Sigmoid colon (tissue), 7 donors: ENCODE measurements at regions of chr6 and their contacts with region 1.

Region 1: GRCh38 chr6:32153564-32154513 is at the start of gene PPT2:
- DNase-seq: peak; percentile 98
- H3K4me3 ChIP-seq: peak within 1 kb of the TSS; percentile 61 to 80 (median 78)
- H3K27ac ChIP-seq: peak within 1 kb of the TSS; percentile 88 to 93 (median 92)
- H3K4me1 ChIP-seq: peaks cover 0 to 59% (median 49%) of the 10 kb centered on the region in 4 donors
- H3K27me3 ChIP-seq: no peaks in the 10 kb centered on the region
- CTCF ChIP-seq: peak in 2 of 4 experiments; percentile 13 to 19
- EP300 ChIP-seq: peak in 2 of 4 donors; percentile 2 to 91
- POLR2A ChIP-seq: peak in 1 of 2 donors; percentile 47
- total RNA-seq, gene PPT2: 15.5 to 126 (median 62.7) TPM

Region 2: DNA sequence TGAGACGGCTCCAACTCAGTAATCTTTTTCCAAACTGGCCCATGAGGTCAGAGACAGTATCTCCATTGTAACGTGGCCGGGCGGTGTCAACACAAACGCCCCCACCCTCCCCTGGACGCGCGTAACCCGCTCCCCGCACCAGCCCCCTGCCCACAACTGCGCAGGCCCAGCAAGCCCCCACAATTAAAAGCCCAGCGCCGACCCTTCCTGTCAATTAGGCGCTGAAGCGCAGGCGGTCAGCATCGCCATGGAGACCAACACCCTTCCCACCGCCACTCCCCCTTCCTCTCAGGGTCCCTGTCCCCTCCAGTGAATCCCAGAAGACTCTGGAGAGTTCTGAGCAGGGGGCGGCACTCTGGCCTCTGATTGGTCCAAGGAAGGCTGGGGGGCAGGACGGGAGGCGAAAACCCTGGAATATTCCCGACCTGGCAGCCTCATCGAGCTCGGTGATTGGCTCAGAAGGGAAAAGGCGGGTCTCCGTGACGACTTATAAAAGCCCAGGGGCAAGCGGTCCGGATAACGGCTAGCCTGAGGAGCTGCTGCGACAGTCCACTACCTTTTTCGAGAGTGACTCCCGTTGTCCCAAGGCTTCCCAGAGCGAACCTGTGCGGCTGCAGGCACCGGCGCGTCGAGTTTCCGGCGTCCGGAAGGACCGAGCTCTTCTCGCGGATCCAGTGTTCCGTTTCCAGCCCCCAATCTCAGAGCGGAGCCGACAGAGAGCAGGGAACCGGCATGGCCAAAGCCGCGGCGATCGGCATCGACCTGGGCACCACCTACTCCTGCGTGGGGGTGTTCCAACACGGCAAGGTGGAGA is 338.6 kb before region 1 on chr6 and contains the starts of genes HSPA1A and HSPA1L:
- intact Hi-C with region 1: no loop called
- DNase-seq: peak; percentile 99
- H3K4me3 ChIP-seq: peak within 1 kb of the TSS; percentile 61 to 78 (median 65)
- H3K27ac ChIP-seq: peak within 1 kb of the TSS; percentile 95 to 100 (median 99)
- H3K4me1 ChIP-seq: peaks cover 0 to 41% (median 39%) of the 10 kb centered on the region in 4 donors
- H3K27me3 ChIP-seq: no peaks in the 10 kb centered on the region
- CTCF ChIP-seq: no peak
- EP300 ChIP-seq: peak in 1 of 4 donors; percentile 74
- POLR2A ChIP-seq: peak; percentile 100
- total RNA-seq, gene HSPA1A: 147 to 321 (median 168) TPM
- total RNA-seq, gene HSPA1L: 1.1 to 2.3 (median 1.8) TPM

Region 3: DNA sequence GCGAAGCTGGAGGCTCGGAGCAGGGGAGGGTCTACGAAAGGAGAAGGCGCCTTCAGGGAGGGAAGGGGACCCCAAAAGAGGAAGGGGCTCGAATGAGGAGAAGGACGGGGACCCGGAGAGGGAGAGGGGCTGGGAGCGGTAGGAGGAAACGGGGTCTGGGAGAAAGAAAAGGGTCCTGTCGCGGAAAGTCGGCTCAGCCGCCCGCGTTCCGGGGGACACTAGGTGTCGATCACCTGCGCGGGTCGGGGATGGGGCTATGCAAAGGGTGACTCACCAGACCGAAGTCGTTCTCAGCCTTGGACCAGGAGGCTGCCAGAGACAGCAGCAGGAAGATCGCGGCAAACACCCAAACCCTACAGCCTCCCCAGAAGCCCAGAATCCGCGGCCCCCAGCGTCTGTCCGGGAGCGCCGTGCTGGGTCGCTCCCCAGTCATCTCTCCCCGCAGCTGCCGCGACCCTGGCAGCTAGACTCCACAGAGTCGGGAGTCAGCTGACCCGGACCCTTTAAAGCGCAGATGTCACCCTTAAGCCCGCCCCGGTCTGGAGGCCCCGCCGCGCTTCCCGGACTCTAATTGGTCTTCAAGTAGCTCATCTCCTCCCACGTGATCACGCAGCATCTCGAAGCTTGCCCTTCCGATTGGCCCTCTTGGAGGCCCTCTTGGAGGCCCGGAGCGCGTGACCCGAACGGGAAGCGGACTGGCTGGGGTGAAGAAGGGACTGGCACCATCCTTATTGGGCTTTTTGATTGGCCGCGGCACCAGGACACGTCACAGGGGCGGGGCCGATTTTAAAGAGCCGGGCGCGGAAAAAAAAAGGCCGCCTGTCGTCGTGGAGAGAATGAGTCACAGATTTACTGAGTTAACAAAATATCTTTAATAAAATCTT is 291.3 kb before region 1 on chr6 and contains the start of gene NEU1:
- intact Hi-C with region 1: no loop called
- DNase-seq: peak; percentile 100
- H3K4me3 ChIP-seq: peak within 1 kb of the TSS; percentile 60 to 74 (median 68)
- H3K27ac ChIP-seq: peak within 1 kb of the TSS; percentile 84 to 89 (median 88)
- H3K4me1 ChIP-seq: peaks cover 0 to 25% (median 15%) of the 10 kb centered on the region in 4 donors
- H3K27me3 ChIP-seq: no peaks in the 10 kb centered on the region
- CTCF ChIP-seq: no peak
- EP300 ChIP-seq: peak in 2 of 4 donors; percentile 7 to 61
- POLR2A ChIP-seq: peak; percentile 97
- total RNA-seq, gene NEU1: 31.3 to 43.2 (median 33.6) TPM

Region 4: DNA sequence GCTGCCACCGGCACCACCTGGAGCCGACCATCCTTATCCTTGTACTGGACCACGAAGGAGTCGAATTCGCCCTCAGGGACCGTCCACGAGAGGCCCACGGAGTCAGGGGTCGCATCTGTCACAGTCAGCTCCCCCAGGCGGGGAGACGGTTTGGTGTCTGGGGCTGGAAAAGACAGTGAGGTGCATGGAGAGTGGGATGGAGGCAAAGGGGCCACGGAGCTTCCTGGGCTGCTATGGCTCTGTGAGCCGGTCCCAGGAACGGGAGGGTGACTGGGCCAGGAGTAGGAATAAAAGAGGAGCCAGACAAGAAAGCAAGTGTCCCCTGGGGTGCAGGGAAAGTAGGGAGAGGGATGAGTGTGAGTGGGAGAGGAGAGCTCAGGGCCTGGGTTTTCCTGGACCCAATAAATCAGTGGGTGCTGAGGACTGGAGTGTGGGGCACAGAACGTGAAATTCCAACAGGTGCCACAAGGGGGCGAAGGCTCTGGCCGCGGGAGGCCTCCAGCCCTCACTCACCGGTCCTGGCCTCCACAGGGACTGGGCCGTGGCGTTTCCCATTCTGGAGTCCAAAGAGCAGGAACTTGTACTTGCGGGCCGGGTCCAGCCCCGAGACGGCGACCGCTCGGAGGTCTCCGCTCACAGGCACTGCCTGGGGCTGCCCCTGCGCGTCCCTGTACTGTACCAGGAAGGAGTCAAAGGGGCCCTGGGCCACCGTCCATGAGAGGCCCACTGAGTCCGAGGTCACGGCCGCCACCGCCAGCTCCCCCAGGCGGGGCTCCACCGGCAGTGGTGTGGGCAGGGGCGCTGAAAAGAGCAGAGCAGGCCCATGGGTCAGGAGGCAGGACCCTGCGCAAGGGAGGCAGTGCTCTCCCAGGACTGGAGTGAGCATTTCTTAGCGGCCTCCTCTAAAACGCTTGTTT is 105.7 kb before region 1 on chr6:
- intact Hi-C with region 1: loop called (anchors 10 kb)
- DNase-seq: peak; percentile 89
- H3K4me3 ChIP-seq: no peak overlapping the region
- H3K27ac ChIP-seq: peak overlapping the region; percentile 54 to 83 (median 66)
- H3K4me1 ChIP-seq: peaks cover 0 to 29% (median 27%) of the 10 kb centered on the region in 4 donors
- H3K27me3 ChIP-seq: no peaks in the 10 kb centered on the region
- CTCF ChIP-seq: peak; percentile 72 to 93 (median 77)
- EP300 ChIP-seq: no peak
- POLR2A ChIP-seq: no peak

Region 5: GRCh38 chr6:32108727-32109113 is 45.1 kb before region 1 on chr6:
- intact Hi-C with region 1: no loop called
- DNase-seq: no peak
- H3K4me3 ChIP-seq: peak overlapping the region; percentile 20 to 48 (median 40)
- H3K27ac ChIP-seq: peak overlapping the region; percentile 70 to 80 (median 76)
- H3K4me1 ChIP-seq: peaks cover 0 to 70% (median 57%) of the 10 kb centered on the region in 4 donors
- H3K27me3 ChIP-seq: no peaks in the 10 kb centered on the region
- CTCF ChIP-seq: no peak
- EP300 ChIP-seq: no peak
- POLR2A ChIP-seq: no peak

Region 6: DNA sequence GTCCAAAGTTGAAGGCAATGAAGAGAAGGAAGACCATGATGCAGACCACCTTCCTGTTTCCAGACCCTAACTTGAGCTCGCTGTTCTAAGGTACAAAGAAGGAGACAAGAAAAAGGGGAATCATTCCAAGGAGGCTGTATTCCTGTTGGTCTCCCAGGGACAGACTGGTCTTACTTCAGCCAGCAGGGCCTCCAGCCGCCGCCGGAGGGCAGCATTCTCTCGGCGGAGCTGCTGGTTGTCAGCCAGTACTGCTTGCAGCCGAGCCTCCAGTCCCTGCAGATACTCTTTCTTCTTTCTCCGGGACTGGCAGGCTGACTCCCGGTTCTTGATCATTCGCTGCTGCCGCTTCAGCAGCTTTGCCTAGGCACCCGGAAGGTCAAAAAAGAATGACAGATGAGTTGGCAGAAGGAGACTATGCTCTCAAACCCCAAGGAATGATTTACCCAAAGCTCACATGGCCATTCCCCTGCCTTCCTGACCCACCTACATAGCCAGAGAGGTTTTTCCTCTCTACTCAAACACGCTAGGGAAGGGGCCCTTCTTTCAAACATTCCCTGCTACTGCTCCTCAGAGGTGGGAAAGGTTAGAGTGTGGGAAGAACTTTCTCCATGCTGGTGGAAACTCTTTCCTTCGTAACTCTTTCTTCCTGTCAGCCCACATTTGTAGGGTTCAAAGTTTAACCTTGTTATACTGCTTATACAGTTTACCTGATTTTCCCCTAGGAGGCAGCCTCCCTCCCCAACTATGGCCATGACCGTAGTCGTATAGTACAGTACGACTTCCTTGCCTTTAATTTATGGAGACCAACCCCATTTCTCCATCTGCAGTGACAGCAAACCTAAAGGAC is 34.8 kb before region 1 on chr6:
- intact Hi-C with region 1: loop called (anchors 1 kb)
- DNase-seq: peak; percentile 96
- H3K4me3 ChIP-seq: no peak overlapping the region
- H3K27ac ChIP-seq: peak overlapping the region; percentile 52 to 69 (median 63)
- H3K4me1 ChIP-seq: peaks cover 0 to 18% (median 16%) of the 10 kb centered on the region in 4 donors
- H3K27me3 ChIP-seq: no peaks in the 10 kb centered on the region
- CTCF ChIP-seq: peak; percentile 77 to 93 (median 90)
- EP300 ChIP-seq: no peak
- POLR2A ChIP-seq: no peak

Region 7: GRCh38 chr6:32127717-32128592 is 25.9 kb before region 1 on chr6 and contains the start of gene ATF6B:
- intact Hi-C with region 1: loop called (anchors 1 kb)
- DNase-seq: peak; percentile 100
- H3K4me3 ChIP-seq: peak within 1 kb of the TSS; percentile 77 to 92 (median 83)
- H3K27ac ChIP-seq: peak within 1 kb of the TSS; percentile 91 to 94 (median 92)
- H3K4me1 ChIP-seq: peaks cover 0 to 36% (median 31%) of the 10 kb centered on the region in 4 donors
- H3K27me3 ChIP-seq: no peaks in the 10 kb centered on the region
- CTCF ChIP-seq: no peak
- EP300 ChIP-seq: no peak
- POLR2A ChIP-seq: peak; percentile 68 to 76
- total RNA-seq, gene ATF6B: 24.5 to 73.4 (median 24.8) TPM

Region 8: GRCh38 chr6:32177788-32178546 is 24.1 kb after region 1 on chr6 and contains the start of gene RNF5:
- intact Hi-C with region 1: loop called (anchors 1 kb)
- DNase-seq: peak; percentile 99
- H3K4me3 ChIP-seq: peak within 1 kb of the TSS; percentile 85 to 97 (median 92)
- H3K27ac ChIP-seq: peak within 1 kb of the TSS; percentile 88 to 96 (median 94)
- H3K4me1 ChIP-seq: peaks cover 0 to 71% (median 50%) of the 10 kb centered on the region in 4 donors
- H3K27me3 ChIP-seq: no peaks in the 10 kb centered on the region
- CTCF ChIP-seq: no peak
- EP300 ChIP-seq: peak in 1 of 4 donors; percentile 22
- POLR2A ChIP-seq: peak in 1 of 2 donors; percentile 24
- total RNA-seq, gene RNF5: 61.5 to 118 (median 95.1) TPM